Dorsolateral prefrontal cortex (tissue), 120 donors: ENCODE measurements at regions of chr17 and their contacts with region 1.

Region 1: GRCh38 chr17:4565209-4566141 is 5.1 kb upstream of the GGT6 start:
- DNase-seq: peak in 7 of 10 donors; percentile 64 to 73 (median 66)
- H3K4me3 ChIP-seq: peak overlapping the region in 17 of 59 donors; percentile 13 to 48 (median 28)
- H3K27ac ChIP-seq: peak overlapping the region in 27 of 59 donors; percentile 3 to 69 (median 50)
- H3K27me3 ChIP-seq: no peaks in the 10 kb centered on the region
- CTCF ChIP-seq: peak; percentile 37 to 89 (median 79)

Region 2: GRCh38 chr17:4498461-4499397 is 66.7 kb before region 1 on chr17 and contains the start of gene SPNS2:
- intact Hi-C with region 1: loop called in 1 of 2 experiments (anchors 1 kb)
- DNase-seq: peak; percentile 44 to 94 (median 82)
- H3K4me3 ChIP-seq: peak within 1 kb of the TSS; percentile 55 to 89 (median 71)
- H3K27ac ChIP-seq: peak within 1 kb of the TSS in 57 of 59 donors; percentile 18 to 89 (median 79)
- H3K27me3 ChIP-seq: peaks cover 0 to 4% (median 0%) of the 10 kb centered on the region in 45 donors
- CTCF ChIP-seq: peak in 30 of 56 donors; percentile 11 to 56 (median 32)
- total RNA-seq, gene SPNS2: 41.1 to 115 (median 69.7) TPM

Region 3: GRCh38 chr17:4625181-4625617 is 59.7 kb after region 1 on chr17:
- intact Hi-C with region 1: loop called (anchors 2 to 5 kb)
- DNase-seq: no peak
- H3K4me3 ChIP-seq: peak overlapping the region in 1 of 59 donors; percentile 37
- H3K27ac ChIP-seq: no peak overlapping the region
- H3K27me3 ChIP-seq: peaks cover 0 to 3% (median 0%) of the 10 kb centered on the region in 45 donors
- CTCF ChIP-seq: no peak

Region 4: DNA sequence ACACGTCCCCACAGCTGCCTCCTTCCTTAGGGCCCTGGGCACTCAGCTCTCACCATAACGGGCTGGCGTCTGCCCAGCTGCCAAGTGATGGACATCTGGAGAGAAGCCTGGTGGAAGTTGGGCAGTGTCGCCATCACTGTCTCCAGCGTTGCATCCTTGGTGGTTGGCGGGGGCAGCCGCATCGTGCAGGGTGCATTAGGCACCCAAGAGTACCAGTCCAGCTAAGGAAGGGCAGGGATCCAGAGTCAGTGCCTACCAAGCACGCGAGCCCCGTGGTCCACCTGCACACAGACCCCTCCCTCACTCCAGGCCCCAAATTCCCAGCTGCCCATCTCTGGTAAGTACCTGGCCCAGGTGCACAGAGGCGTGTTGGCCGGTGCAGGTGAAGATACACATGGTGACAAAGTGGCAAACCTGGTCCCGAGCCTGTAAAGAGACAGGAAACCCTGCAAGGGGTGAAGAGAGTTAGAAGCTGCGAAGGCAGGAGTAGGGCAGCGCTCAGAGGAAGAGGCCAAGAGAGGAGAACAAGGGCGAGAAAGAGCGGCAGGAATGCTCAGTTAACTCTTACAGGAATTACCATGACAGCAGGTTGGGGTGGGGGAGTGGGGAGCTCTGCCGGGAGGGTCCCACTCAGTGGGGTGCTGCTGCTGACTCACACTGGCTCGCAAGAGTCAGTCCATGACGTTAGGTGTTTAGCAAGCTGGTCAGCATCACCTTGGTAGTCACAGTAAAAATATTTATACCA is 66.5 kb after region 1 on chr17:
- intact Hi-C with region 1: loop called in 1 of 2 experiments (anchors 5 kb)
- DNase-seq: no peak
- H3K4me3 ChIP-seq: no peak overlapping the region
- H3K27ac ChIP-seq: no peak overlapping the region
- H3K27me3 ChIP-seq: peaks cover 0 to 24% (median 5%) of the 10 kb centered on the region in 45 donors
- CTCF ChIP-seq: no peak